Sigmoid colon (tissue), 7 donors: ENCODE measurements at regions of chr20 and their contacts with region 1.

Region 1: GRCh38 chr20:49610701-49611538 is 43.0 kb upstream of the PTGIS start:
- DNase-seq: peak; percentile 87
- H3K4me3 ChIP-seq: peak overlapping the region in 3 of 4 donors; percentile 10 to 17 (median 16)
- H3K27ac ChIP-seq: no peak overlapping the region
- H3K4me1 ChIP-seq: peaks cover 0 to 17% (median 11%) of the 10 kb centered on the region in 4 donors
- H3K27me3 ChIP-seq: peaks cover 0 to 4% (median 0%) of the 10 kb centered on the region in 3 donors
- CTCF ChIP-seq: peak; percentile 98 to 100 (median 100)
- EP300 ChIP-seq: no peak
- POLR2A ChIP-seq: no peak

Region 2: GRCh38 chr20:49541733-49542513 is 69.0 kb before region 1 on chr20:
- intact Hi-C with region 1: loop called (anchors 2 kb)
- DNase-seq: peak; percentile 78
- H3K4me3 ChIP-seq: no peak overlapping the region
- H3K27ac ChIP-seq: peak overlapping the region in 2 of 4 donors; percentile 20 to 52
- H3K4me1 ChIP-seq: peaks cover 0 to 6% (median 0%) of the 10 kb centered on the region in 4 donors
- H3K27me3 ChIP-seq: no peaks in the 10 kb centered on the region
- CTCF ChIP-seq: peak; percentile 76 to 95 (median 92)
- EP300 ChIP-seq: no peak
- POLR2A ChIP-seq: no peak

Region 3: DNA sequence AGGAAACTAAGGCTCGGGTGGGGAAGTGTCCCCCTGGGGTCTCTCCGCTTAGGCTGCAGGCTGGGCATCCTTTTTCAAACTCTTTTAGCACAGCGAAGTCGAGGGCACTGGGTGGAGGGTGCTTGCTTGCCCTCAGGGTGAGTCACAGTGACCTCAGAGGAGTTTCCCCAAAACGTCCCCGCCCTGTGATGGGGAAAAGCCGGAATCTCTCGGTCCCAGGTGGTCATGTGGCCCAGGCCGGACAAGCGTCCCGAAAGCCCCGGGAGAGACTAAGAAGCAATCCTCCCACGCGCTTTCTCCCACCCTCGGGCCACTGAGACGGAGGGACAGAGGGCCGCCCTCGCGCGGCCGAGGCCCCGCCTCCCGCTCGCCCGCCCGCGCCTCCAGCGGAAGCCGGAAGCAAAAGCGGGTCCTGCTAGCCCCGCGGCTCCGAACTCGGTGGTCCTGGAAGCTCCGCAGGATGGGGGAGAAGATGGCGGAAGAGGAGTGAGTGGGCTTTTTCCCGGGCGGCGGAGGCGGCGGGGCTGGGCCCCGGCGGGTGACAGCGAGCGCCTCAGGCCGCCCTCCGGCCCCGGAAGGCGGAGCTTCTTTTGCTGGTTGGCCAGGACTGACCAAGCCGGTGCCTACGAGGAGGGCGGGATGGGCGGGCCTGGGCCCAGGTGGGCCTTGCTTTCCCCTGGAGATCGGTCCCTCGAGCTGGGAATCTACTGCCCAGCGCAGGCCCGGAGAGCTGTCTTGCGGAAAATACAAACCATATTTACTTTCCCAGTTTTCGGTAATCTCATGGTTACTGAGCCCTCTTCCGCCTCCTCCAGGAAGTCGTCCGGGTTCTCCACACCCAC is 201.8 kb after region 1 on chr20 and contains the start of gene SLC9A8:
- intact Hi-C with region 1: loop called (anchors 1 kb)
- DNase-seq: peak; percentile 95
- H3K4me3 ChIP-seq: peak within 1 kb of the TSS; percentile 75 to 97 (median 86)
- H3K27ac ChIP-seq: peak within 1 kb of the TSS; percentile 86 to 98 (median 94)
- H3K4me1 ChIP-seq: peaks cover 0 to 18% (median 15%) of the 10 kb centered on the region in 4 donors
- H3K27me3 ChIP-seq: no peaks in the 10 kb centered on the region
- CTCF ChIP-seq: peak in 3 of 4 experiments; percentile 20 to 46 (median 41)
- EP300 ChIP-seq: peak in 1 of 4 donors; percentile 21
- POLR2A ChIP-seq: peak; percentile 34 to 77
- total RNA-seq, gene SLC9A8: 4.9 to 8.7 (median 6.0) TPM

Region 4: DNA sequence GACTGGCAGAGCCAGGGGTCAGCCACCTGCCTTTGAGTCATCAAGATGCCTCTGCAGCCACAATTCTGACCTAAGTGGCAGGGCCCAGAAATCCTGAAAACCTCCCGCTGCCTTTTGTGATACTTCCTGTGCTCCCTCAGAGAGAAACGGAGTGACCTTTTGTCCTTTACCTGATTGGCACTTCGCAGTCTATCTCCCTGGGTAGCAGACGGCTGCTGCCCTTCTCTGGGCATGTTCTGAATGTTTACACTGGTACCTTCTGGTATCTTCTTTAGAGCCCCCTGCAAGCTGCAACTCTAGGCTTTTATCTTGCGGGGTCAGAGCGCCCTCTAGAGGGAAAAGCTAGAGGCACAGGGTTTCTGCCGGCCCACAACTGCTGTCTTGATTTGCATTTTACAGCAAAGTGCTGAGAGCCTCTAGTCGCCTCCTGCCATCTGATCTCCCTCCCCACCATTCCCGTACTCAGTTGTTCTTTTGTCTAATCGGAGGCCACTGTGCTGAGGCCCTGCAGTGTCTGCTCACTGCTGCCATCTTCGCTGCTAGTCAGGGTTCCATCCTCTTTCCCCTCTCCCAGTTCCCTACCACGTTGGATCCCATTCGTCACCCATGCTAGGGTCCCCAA is 277.5 kb after region 1 on chr20:
- intact Hi-C with region 1: loop called (anchors 5 kb)
- DNase-seq: peak; percentile 62
- H3K4me3 ChIP-seq: no peak overlapping the region
- H3K27ac ChIP-seq: peak overlapping the region in 3 of 4 donors; percentile 37 to 56 (median 49)
- H3K4me1 ChIP-seq: peaks cover 0 to 44% (median 21%) of the 10 kb centered on the region in 4 donors
- H3K27me3 ChIP-seq: no peaks in the 10 kb centered on the region
- CTCF ChIP-seq: peak in 3 of 4 experiments; percentile 49 to 78 (median 63)
- EP300 ChIP-seq: no peak
- POLR2A ChIP-seq: no peak